ENCODE measurements at regions of chr5 and their contacts with region 1.

Region 1: DNA sequence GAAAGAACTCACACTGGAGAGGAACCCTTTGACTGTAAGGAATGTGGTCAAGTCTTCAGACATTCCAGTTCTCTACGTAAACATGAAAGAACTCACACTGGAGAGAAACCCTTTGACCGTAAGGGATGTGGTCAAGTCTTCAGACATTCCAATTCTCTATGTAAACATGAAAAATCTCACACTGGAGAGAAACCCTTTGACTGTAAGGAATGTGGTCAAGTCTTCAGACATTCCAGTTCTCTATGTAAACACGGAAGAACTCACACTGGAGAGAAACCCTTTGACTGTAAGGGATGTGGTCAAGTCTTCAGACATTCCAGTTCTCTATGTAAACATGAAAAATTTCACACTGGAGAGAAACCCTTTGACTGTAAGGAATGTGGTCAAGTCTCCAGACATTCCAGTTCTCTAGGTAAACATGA is 32.6 kb downstream of the MAPK9 start:
- H3K4me3 Mint-ChIP-seq: no peak overlapping the region
- H3K27ac Mint-ChIP-seq: no peak overlapping the region
- H3K4me1 Mint-ChIP-seq: no peaks in the 10 kb centered on the region
- H3K27me3 Mint-ChIP-seq: no peaks in the 10 kb centered on the region

Region 2: DNA sequence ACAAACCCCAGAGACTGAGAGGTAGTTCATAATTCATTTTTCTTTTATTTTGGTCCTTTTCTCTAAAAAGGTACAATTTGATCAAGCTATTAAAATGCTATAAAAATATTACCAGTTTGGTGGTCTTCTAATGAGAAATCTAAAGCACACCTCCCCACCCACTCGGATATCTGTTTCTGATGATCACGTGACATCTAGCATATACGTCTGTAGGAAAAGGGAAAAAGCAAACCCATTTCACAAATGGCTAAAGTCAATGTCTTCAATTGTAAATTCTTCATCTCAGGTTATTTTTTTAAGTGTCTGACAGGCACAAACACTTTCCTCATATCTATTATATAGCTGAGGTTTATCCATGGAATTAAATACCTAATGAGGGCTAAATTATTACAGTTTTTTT is 1547.7 kb before region 1 on chr5:
- intact Hi-C with region 1: loop called (anchors 10 kb)
- H3K4me3 Mint-ChIP-seq: no peak overlapping the region
- H3K27ac Mint-ChIP-seq: no peak overlapping the region
- H3K4me1 Mint-ChIP-seq: no peaks in the 10 kb centered on the region
- H3K27me3 Mint-ChIP-seq: no peaks in the 10 kb centered on the region

Region 3: GRCh38 chr5:179893069-179893957 is 366.0 kb before region 1 on chr5:
- intact Hi-C with region 1: no loop called
- H3K4me3 Mint-ChIP-seq: no peak overlapping the region
- H3K27ac Mint-ChIP-seq: no peak overlapping the region
- H3K4me1 Mint-ChIP-seq: no peaks in the 10 kb centered on the region
- H3K27me3 Mint-ChIP-seq: no peaks in the 10 kb centered on the region

Region 4: DNA sequence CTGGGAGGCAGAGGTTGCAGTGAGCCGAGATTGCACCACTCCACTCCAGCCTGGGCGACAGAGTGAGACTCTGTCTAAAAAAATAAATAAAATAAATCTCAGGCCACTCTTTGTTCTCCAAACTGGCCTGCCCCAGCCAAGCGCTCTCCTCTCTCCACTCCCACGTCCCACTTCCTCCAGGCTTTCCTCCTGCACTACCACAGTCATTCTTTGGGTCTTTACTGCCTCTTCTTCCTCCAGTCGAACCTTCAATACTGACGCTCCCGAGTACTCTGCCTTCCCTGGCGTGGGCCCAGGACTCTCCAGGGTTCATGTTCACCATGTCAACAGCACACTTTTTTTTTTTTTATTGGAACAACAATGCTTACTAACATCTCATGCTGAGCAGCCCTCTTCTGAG is 211.6 kb before region 1 on chr5:
- intact Hi-C with region 1: no loop called
- H3K4me3 Mint-ChIP-seq: no peak overlapping the region
- H3K27ac Mint-ChIP-seq: peak overlapping the region; percentile 58
- H3K4me1 Mint-ChIP-seq: peaks cover 60% of the 10 kb centered on the region
- H3K27me3 Mint-ChIP-seq: no peaks in the 10 kb centered on the region